ENCODE measurements at regions of chr4 and their contacts with region 1.

Region 1: GRCh38 chr4:92305148-92305877 is 1.5 kb downstream of the GRID2 start:
- DNase-seq: peak; percentile 63
- ATAC-seq: peak; percentile 85
- H3K4me3 ChIP-seq: peak overlapping the region; percentile 80
- H3K27ac ChIP-seq: no peak overlapping the region
- H3K4me1 ChIP-seq: peaks cover 11% of the 10 kb centered on the region; the same call in 1 of the 2 replicates
- H3K27me3 ChIP-seq: no peaks in the 10 kb centered on the region
- CTCF ChIP-seq: no peak

Region 2: GRCh38 chr4:90317785-90318184 is 1987.5 kb before region 1 on chr4:
- CTCF ChIA-PET with region 1: no interaction called
- POLR2A ChIA-PET with region 1: no interaction called
- intact Hi-C with region 1: loop called (anchors 10 kb)
- DNase-seq: peak; percentile 77
- ATAC-seq: peak; percentile 56
- H3K4me3 ChIP-seq: peak overlapping the region; percentile 44; the same call in 1 of the 2 replicates
- H3K27ac ChIP-seq: peak overlapping the region; percentile 97
- H3K4me1 ChIP-seq: peaks cover 42% of the 10 kb centered on the region
- H3K27me3 ChIP-seq: no peaks in the 10 kb centered on the region
- CTCF ChIP-seq: no peak

Region 3: GRCh38 chr4:92035666-92036065 is 269.6 kb before region 1 on chr4:
- CTCF ChIA-PET with region 1: no interaction called
- POLR2A ChIA-PET with region 1: no interaction called
- intact Hi-C with region 1: no loop called
- DNase-seq: no peak
- ATAC-seq: no peak
- H3K4me3 ChIP-seq: no peak overlapping the region
- H3K27ac ChIP-seq: no peak overlapping the region
- H3K4me1 ChIP-seq: no peaks in the 10 kb centered on the region
- H3K27me3 ChIP-seq: no peaks in the 10 kb centered on the region
- CTCF ChIP-seq: no peak

Region 4: DNA sequence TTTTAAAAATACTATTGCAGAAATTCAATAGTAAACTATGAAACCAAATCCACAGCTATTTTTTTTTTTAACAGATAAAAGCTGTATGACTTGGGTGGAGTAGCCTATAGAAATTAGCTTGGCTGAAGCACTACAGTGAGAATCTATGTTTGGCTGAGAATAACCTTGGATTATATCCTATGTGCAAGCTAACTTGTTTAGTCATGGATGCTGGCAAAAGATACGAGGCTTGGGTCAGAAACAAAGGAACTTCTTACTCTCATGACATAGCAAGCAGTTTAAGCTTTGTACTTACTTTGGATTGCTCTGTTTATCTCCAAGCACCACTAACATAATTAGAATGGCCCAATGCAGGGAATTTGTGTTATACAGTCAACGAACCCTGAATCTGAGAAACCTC is 120.7 kb before region 1 on chr4:
- CTCF ChIA-PET with region 1: no interaction called
- POLR2A ChIA-PET with region 1: no interaction called
- intact Hi-C with region 1: no loop called
- DNase-seq: no peak
- ATAC-seq: no peak
- H3K4me3 ChIP-seq: no peak overlapping the region
- H3K27ac ChIP-seq: no peak overlapping the region
- H3K4me1 ChIP-seq: no peaks in the 10 kb centered on the region
- H3K27me3 ChIP-seq: no peaks in the 10 kb centered on the region
- CTCF ChIP-seq: no peak

Region 5: GRCh38 chr4:92234393-92235176 is 70.7 kb before region 1 on chr4:
- CTCF ChIA-PET with region 1: no interaction called
- POLR2A ChIA-PET with region 1: no interaction called
- intact Hi-C with region 1: loop called (anchors 2 kb)
- DNase-seq: peak; percentile 98
- ATAC-seq: peak; percentile 85
- H3K4me3 ChIP-seq: peak overlapping the region; percentile 38; the same call in 1 of the 2 replicates
- H3K27ac ChIP-seq: peak overlapping the region; percentile 92
- H3K4me1 ChIP-seq: peaks cover 72% of the 10 kb centered on the region
- H3K27me3 ChIP-seq: no peaks in the 10 kb centered on the region
- CTCF ChIP-seq: no peak

Region 6: GRCh38 chr4:92551616-92552015 is 246.3 kb after region 1 on chr4:
- CTCF ChIA-PET with region 1: no interaction called
- POLR2A ChIA-PET with region 1: no interaction called
- intact Hi-C with region 1: loop called (anchors 5 kb)
- DNase-seq: no peak
- ATAC-seq: no peak
- H3K4me3 ChIP-seq: no peak overlapping the region
- H3K27ac ChIP-seq: no peak overlapping the region
- H3K4me1 ChIP-seq: no peaks in the 10 kb centered on the region
- H3K27me3 ChIP-seq: no peaks in the 10 kb centered on the region
- CTCF ChIP-seq: peak; percentile 21; the same call in 1 of the 2 replicates

Region 7: GRCh38 chr4:93764639-93765246 is 1459.4 kb after region 1 on chr4:
- CTCF ChIA-PET with region 1: no interaction called
- POLR2A ChIA-PET with region 1: no interaction called
- intact Hi-C with region 1: loop called (anchors 10 kb)
- DNase-seq: peak; percentile 76
- ATAC-seq: peak; percentile 49; the same call in 1 of the 2 replicates
- H3K4me3 ChIP-seq: no peak overlapping the region
- H3K27ac ChIP-seq: no peak overlapping the region
- H3K4me1 ChIP-seq: no peaks in the 10 kb centered on the region
- H3K27me3 ChIP-seq: no peaks in the 10 kb centered on the region
- CTCF ChIP-seq: peak; percentile 77

Measured in PC-3 (cell line).